ENCODE measurements at regions of chr5 and their contacts with region 1.

Region 1: DNA sequence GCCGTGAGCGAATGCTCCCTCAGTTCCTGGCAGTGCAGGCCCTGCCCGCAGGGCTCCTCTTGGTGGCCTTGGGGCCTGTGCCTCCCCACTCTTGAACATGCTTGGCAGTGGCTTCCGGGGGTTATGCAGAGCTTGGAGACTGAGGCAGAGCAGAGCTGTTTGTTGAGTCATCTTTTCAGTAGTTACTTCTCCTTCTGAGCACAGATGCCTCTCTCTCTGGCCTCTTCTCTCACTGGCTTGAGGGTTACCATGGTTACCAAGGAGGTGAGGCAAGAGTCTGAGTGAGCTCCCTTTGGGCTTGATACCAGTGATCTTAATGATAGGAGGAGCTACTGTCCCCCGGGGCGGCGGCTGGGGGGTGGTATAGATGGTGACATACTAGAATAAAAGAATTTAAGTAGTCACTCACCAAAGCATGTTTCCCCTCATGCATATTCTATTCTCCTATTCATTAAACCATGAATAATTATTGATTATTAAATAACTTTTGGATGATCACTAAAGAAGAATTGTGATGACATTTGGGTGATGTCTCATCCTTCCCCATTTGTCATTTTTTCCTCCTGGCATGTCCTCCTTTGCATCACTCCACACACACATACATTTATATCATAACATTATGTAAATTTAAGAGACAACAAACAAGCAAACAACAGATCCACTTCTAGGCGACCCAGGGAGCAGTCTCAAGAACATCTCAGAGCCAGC is 111.1 kb downstream of the ARHGAP26 start:
- DNase-seq: peak; percentile 78
- H3K4me3 ChIP-seq: no peak overlapping the region
- H3K27ac ChIP-seq: peak overlapping the region in 5 of 8 donors; percentile 4 to 66 (median 41)
- H3K4me1 ChIP-seq: peaks cover 5 to 87% (median 20%) of the 10 kb centered on the region in 6 donors
- H3K27me3 ChIP-seq: no peaks in the 10 kb centered on the region
- CTCF ChIP-seq: no peak
- POLR2A ChIP-seq: no peak

Region 2: DNA sequence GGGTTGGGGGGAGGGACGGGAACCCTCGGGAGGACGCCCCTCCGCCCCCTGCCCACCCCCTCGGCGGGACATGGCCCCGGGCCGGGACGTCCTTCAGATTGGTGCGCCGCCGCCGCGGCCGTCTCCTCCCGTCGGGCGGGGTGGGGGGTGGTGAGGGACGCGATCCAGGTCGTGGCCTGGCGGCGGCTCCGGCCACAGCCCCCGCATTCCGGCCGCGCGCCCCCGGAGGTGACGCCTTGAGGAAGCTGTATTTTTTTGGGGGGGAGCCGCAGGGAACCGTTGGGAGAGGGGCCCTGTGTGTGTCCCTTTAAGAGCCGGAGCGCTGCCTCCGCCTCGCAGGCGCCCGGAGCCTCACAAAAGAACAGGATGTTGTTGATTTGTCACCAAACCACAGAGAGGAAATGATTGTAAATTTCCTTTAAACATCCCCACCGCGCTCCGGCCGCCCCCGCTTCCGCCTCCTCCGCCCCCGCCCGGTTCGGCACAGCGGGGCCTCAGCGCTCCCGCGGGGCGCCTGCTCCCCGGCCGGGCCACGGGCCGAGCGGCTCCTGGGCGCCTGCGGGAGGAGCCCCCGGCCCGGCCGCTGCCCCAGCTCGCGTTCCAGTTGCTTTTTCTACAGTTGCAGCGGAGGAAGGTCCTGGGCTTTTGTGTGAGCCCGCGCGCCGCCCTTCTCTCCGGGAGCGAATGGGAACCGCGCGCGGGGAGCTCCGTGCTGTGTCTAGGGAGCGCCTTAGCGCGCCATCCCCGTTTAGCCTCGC is 524.3 kb before region 1 on chr5:
- intact Hi-C with region 1: no loop called
- DNase-seq: peak; percentile 97
- H3K4me3 ChIP-seq: peak overlapping the region; percentile 39 to 74 (median 51)
- H3K27ac ChIP-seq: peak overlapping the region; percentile 88 to 98 (median 94)
- H3K4me1 ChIP-seq: peaks cover 0 to 57% (median 27%) of the 10 kb centered on the region in 6 donors
- H3K27me3 ChIP-seq: peaks cover 0 to 63% (median 0%) of the 10 kb centered on the region in 7 donors
- CTCF ChIP-seq: peak in 1 of 11 experiments; percentile 23
- POLR2A ChIP-seq: peak in 1 of 3 donors; percentile 70

Region 3: DNA sequence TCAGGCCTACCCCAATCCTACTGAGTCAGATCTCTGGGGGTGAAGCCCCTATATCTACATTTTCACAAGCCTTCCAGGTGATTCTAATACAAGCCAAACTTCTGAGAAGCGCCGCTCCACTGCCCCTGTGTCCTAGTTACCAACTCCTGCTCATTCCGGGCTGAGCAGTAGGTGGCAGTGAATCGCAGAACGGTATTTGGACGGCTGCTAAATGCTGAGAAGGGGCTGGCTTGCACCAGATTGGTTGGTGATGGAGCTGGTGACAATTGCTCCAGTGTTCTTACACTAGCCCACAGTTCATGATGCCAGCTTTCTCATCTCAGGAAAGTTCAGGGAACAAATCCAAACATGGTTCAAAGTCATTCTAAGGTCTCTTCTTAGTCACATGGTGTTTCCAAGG is 164.3 kb before region 1 on chr5:
- intact Hi-C with region 1: loop called (anchors 5 kb)
- DNase-seq: no peak
- H3K4me3 ChIP-seq: no peak overlapping the region
- H3K27ac ChIP-seq: no peak overlapping the region
- H3K4me1 ChIP-seq: peaks cover 0 to 34% (median 20%) of the 10 kb centered on the region in 6 donors
- H3K27me3 ChIP-seq: peaks cover 0 to 6% (median 0%) of the 10 kb centered on the region in 7 donors
- CTCF ChIP-seq: peak in 3 of 11 experiments; percentile 4 to 27 (median 9)
- POLR2A ChIP-seq: no peak

Region 4: GRCh38 chr5:142737179-142737578 is 144.1 kb before region 1 on chr5:
- intact Hi-C with region 1: no loop called
- DNase-seq: no peak
- H3K4me3 ChIP-seq: no peak overlapping the region
- H3K27ac ChIP-seq: no peak overlapping the region
- H3K4me1 ChIP-seq: peaks cover 0 to 25% (median 17%) of the 10 kb centered on the region in 6 donors
- H3K27me3 ChIP-seq: no peaks in the 10 kb centered on the region
- CTCF ChIP-seq: no peak
- POLR2A ChIP-seq: no peak